ENCODE measurements at regions of chr7 and their contacts with region 1.

Region 1: DNA sequence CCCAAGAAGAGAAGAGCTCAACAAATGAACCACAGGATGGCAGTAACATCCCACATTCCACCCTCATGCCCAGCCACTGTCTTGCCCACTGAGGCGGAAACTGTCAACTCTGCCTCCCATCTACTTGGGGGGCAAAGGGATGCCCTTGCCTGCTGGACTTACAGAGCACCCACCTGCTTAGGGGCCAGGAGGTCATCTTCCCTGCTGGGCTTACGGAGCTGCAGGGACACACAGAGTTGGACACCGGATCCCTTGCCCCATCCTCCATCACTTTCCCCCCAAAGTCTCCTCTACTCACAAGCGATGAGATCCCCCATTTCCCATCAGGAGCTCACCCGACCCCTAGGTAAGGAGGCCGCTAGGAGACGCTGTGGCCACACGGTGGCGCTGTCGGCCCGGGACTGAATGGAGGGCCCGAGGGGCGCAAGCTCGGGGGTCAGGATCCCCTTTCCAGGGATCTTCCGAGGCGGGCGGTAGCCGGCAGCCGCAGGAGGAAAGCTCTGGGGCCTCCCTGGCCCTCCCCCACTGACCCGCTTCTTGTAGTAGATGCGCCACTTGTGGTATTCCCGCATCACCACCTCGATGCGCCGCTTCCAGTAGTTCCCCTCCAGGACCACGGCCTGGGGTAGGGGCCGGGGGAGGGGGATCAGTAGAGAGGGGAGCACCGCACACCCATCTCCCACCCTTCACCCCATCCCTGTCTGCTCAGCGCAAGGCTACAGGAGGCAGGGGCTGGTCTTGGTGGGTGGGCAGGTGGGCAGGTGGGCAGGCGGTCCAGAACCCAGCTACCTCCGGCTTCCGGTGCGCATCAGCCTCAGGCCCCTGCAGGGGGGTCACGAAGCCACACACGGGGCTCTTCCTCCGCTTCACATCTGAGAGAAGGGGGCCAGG is 17.3 kb downstream of the MLXIPL start:
- DNase-seq: peak; percentile 82

Region 2: GRCh38 chr7:73667344-73668102 is 60.5 kb after region 1 on chr7 and contains the start of gene VPS37D:
- intact Hi-C with region 1: loop called (anchors 2 kb)
- DNase-seq: peak; percentile 94
- total RNA-seq, gene VPS37D: 2.4 TPM

Region 3: GRCh38 chr7:73718905-73719805 is 112.1 kb after region 1 on chr7 and contains the start of gene STX1A:
- intact Hi-C with region 1: loop called (anchors 2 kb)
- DNase-seq: no peak
- total RNA-seq, gene STX1A: 3.3 TPM

Region 4: GRCh38 chr7:73858807-73859206 is 251.8 kb after region 1 on chr7:
- intact Hi-C with region 1: loop called (anchors 5 kb)
- DNase-seq: no peak

Region 5: GRCh38 chr7:74068393-74069085 is 461.5 kb after region 1 on chr7:
- intact Hi-C with region 1: no loop called
- DNase-seq: no peak

Measured in cardiac septum (tissue), 1 donor.